Esophagus muscularis mucosa (tissue), 4 donors: ENCODE measurements at regions of chr6 and their contacts with region 1.

Region 1: DNA sequence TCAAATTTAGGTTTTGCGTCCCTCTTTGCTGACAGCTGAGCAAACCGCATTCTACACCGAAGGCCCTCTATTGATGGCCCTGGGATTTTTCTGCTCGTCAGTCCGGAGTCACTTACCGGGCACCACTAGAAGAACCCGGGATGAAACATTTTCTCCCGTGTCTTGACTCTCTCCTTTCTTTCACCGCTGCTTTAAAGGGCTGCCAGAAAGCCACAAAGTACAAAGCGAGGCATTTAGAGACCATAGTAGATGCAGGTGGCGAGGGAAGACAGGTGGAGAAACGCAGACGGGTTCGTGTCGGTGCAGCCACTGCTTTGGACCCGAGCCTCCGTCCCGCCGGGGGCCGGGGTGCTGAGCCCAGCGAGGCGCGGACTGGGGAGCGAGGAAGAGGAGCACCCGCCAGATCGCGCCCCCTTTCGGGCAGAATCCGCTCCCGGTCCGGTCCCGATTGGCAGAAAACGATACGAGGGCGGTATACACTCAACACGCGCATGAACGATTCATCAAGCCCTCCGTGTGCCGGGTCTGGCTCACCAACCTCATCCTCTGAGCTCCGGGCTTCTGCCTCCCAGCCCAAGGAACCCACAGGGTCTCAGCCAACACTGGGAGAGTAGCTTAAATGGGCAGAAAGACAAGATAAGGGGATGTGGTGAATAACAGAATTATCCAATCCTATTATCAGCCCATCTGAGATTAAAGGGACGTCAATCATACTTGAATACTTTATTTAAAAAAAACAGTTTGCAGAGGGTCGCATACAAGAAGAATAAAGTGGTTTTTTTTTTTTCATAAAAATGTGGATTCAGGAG is 84.9 kb downstream of the TRIM27 start:
- DNase-seq: peak; percentile 93
- H3K4me3 ChIP-seq: peak overlapping the region; percentile 65 to 77 (median 67)
- H3K27ac ChIP-seq: peak overlapping the region; percentile 69 to 83 (median 78)
- H3K4me1 ChIP-seq: peaks cover 12 to 25% (median 21%) of the 10 kb centered on the region in 4 donors
- H3K27me3 ChIP-seq: peaks cover 0 to 40% (median under 1%) of the 10 kb centered on the region in 4 donors
- CTCF ChIP-seq: peak; percentile 43 to 56 (median 45)
- EP300 ChIP-seq: no peak
- POLR2A ChIP-seq: no peak

Region 2: GRCh38 chr6:28586962-28587745 is 251.7 kb before region 1 on chr6:
- intact Hi-C with region 1: no loop called
- DNase-seq: no peak
- H3K4me3 ChIP-seq: peak overlapping the region; percentile 56 to 71 (median 58)
- H3K27ac ChIP-seq: no peak overlapping the region
- H3K4me1 ChIP-seq: peaks cover 4 to 24% (median 10%) of the 10 kb centered on the region in 4 donors
- H3K27me3 ChIP-seq: peaks cover 0 to 73% (median 19%) of the 10 kb centered on the region in 4 donors
- CTCF ChIP-seq: no peak
- EP300 ChIP-seq: no peak
- POLR2A ChIP-seq: no peak

Region 3: DNA sequence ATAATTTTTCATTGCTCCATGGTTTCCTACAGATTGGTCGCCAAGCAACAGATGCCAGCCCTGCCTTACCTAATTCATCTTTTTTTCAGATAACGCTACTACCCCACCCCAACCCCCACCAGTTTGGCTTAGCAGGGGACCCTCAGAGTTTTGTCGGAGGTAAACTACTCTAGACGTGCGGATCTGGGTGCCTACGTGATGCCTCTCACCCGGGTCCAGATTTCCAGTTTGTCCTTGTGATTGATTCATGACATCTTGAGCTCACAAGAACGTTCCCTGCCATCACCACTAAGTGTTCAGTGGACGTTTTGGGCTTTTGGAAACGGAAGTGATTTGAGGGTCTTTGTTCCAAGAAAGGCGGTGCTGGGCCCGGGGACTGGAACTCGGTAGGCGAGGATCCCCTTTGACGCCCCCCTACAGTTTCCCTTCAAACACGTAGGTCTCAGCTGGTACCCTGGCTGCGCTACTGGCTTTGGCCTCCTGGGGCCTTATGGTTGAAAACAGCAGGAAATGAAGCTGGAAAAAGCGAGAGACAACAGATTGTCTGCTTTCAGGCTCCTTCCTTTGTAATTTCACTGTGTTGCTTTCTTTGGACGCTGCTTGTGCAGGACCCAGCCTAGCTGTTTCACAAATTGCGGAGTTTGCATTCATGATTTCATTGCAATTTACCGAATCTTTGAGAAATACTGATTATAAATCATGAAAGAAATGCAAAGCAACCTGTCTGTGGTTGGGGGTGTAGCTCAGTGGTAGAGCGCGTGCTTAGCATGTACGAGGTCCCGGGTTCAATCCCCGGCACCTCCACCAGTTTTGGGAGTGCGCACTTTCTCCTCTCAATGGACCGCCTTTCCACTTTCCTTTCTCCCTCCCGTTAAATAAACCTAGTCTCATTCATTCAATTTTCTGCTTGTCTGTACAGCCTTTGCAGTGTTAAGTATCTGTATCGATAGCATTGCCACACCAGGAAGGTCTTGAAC is 232.1 kb before region 1 on chr6:
- intact Hi-C with region 1: no loop called
- DNase-seq: no peak
- H3K4me3 ChIP-seq: no peak overlapping the region
- H3K27ac ChIP-seq: no peak overlapping the region
- H3K4me1 ChIP-seq: no peaks in the 10 kb centered on the region
- H3K27me3 ChIP-seq: peaks cover 0 to 59% (median 6%) of the 10 kb centered on the region in 4 donors
- CTCF ChIP-seq: no peak
- EP300 ChIP-seq: no peak
- POLR2A ChIP-seq: no peak

Region 4: GRCh38 chr6:28695715-28696114 is 143.1 kb before region 1 on chr6:
- intact Hi-C with region 1: loop called (anchors 10 kb)
- DNase-seq: no peak
- H3K4me3 ChIP-seq: peak overlapping the region in 1 of 4 donors; percentile 17
- H3K27ac ChIP-seq: no peak overlapping the region
- H3K4me1 ChIP-seq: no peaks in the 10 kb centered on the region
- H3K27me3 ChIP-seq: peaks cover 0 to 96% (median 12%) of the 10 kb centered on the region in 4 donors
- CTCF ChIP-seq: no peak
- EP300 ChIP-seq: no peak
- POLR2A ChIP-seq: no peak

Region 5: GRCh38 chr6:28807682-28808280 is 31.1 kb before region 1 on chr6:
- intact Hi-C with region 1: no loop called
- DNase-seq: no peak
- H3K4me3 ChIP-seq: no peak overlapping the region
- H3K27ac ChIP-seq: no peak overlapping the region
- H3K4me1 ChIP-seq: peaks cover 0 to 6% (median 0%) of the 10 kb centered on the region in 4 donors
- H3K27me3 ChIP-seq: peaks cover 0 to 99% (median 46%) of the 10 kb centered on the region in 4 donors
- CTCF ChIP-seq: no peak
- EP300 ChIP-seq: no peak
- POLR2A ChIP-seq: no peak

Region 6: GRCh38 chr6:28863604-28864320 is 24.9 kb after region 1 on chr6:
- intact Hi-C with region 1: loop called (anchors 1 kb)
- DNase-seq: peak; percentile 95
- H3K4me3 ChIP-seq: peak overlapping the region; percentile 75 to 79 (median 76)
- H3K27ac ChIP-seq: peak overlapping the region; percentile 74 to 82 (median 82)
- H3K4me1 ChIP-seq: peaks cover 15 to 19% (median 16%) of the 10 kb centered on the region in 4 donors
- H3K27me3 ChIP-seq: no peaks in the 10 kb centered on the region
- CTCF ChIP-seq: no peak
- EP300 ChIP-seq: no peak
- POLR2A ChIP-seq: no peak

Region 7: GRCh38 chr6:28880894-28881780 is 42.3 kb after region 1 on chr6:
- intact Hi-C with region 1: loop called (anchors 5 kb)
- DNase-seq: no peak
- H3K4me3 ChIP-seq: peak overlapping the region; percentile 51 to 63 (median 52)
- H3K27ac ChIP-seq: no peak overlapping the region
- H3K4me1 ChIP-seq: peaks cover 0 to 17% (median 6%) of the 10 kb centered on the region in 4 donors
- H3K27me3 ChIP-seq: peaks cover 0 to 23% (median 10%) of the 10 kb centered on the region in 4 donors
- CTCF ChIP-seq: no peak
- EP300 ChIP-seq: no peak
- POLR2A ChIP-seq: no peak

Region 8: GRCh38 chr6:28940858-28941680 is 102.2 kb after region 1 on chr6:
- intact Hi-C with region 1: loop called (anchors 5 kb)
- DNase-seq: peak; percentile 95
- H3K4me3 ChIP-seq: peak overlapping the region; percentile 59 to 71 (median 62)
- H3K27ac ChIP-seq: peak overlapping the region; percentile 76 to 86 (median 82)
- H3K4me1 ChIP-seq: peaks cover 8 to 38% (median 35%) of the 10 kb centered on the region in 4 donors
- H3K27me3 ChIP-seq: no peaks in the 10 kb centered on the region
- CTCF ChIP-seq: no peak
- EP300 ChIP-seq: no peak
- POLR2A ChIP-seq: no peak

Region 9: DNA sequence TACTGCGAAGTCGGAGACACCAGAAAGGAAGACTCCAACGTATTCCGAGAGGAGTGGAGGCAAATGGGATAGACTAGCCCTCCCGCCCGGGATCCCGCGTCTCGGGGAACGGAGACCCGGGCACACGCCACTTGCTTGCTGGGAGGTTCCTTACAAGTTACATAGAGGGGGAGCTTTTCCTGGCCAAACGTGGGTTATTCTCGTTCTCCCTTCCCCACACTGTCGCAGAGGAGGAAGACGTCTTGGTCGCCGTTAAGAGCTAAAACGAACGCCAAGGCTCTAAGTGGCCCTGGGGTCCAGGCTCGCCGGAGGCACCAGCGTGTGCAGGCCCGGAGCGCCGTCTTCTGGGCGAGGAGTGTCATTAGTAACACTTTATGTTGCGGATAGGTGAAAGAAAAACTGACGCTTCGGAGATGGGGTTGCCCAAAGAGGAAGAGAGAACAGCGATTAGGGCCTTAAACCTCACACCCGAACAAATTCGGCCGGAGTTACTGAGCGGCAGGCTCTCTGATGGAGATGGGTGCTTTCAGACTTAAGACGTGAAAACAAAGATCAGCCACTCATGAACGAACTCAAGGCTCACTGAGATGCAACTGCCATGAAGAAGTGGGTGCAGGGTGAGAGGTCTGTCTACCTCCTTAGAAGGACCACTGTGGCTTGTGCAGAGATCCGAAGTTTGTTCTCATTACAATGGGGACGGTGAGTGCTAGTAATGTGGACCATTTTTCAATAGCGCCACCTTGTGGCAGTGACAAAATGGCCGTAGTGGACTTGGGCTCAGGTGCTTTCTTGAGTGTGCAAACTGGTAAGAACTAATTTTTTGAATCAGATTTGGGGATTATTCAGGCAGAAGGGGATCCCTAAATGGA is 178.0 kb after region 1 on chr6:
- intact Hi-C with region 1: loop called (anchors 1 kb)
- DNase-seq: no peak
- H3K4me3 ChIP-seq: peak overlapping the region; percentile 55 to 67 (median 56)
- H3K27ac ChIP-seq: peak overlapping the region in 1 of 4 donors; percentile 35
- H3K4me1 ChIP-seq: peaks cover 0 to 27% (median 12%) of the 10 kb centered on the region in 4 donors
- H3K27me3 ChIP-seq: peaks cover 0 to 49% (median 17%) of the 10 kb centered on the region in 4 donors
- CTCF ChIP-seq: peak; percentile 68 to 76 (median 71)
- EP300 ChIP-seq: no peak
- POLR2A ChIP-seq: no peak